ENCODE measurements at regions of chr1 and their contacts with region 1.

Region 1: DNA sequence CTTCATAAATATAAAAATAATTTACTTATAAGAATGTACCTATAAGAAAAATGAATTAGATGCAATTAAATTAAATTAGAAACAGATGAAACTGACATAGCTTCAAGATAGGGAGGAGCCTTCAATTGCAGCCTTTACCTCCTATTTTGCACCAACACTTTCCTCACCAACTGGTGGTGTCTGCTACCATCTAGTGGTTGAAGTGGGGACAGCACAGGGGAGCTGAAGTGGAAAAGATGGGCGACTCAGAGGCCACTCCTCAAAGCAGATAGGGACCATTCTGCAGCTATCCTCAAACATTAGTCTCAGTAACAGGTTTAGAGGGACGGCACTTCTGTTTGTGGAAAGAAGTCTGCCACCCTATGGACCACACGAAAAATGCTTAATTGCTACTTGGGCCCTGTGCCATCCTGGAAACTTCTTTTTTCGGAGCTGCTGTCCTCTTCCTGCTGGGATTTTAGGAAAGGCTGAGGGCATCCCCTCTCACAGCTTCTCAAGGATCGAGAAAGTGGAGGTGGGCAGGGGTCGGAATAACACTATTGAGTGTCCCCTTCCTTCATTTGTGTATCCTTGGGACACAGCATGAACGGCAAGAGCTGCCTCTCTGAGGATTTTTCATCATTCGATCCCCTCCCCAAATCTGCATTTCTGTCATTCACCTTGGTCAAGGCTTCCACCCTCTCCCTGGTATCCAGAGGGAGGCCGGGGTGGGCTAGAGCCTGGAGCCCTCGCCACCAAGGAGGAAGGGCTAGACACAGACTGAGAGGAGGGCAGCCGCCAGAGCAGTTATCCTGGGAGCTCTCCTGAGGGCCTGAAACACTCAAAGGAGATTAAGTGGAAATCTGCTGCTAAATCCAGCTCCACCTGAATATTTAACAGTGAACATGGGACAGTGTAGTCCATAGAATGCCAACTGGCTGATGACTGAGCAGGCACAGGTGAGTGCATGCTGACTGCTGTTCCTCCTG is 9.6 kb downstream of the PROK1 start:
- DNase-seq: peak; percentile 72 to 89 (median 82)
- ATAC-seq: peak; percentile 99
- H3K4me3 ChIP-seq: no peak overlapping the region
- H3K4me3 Mint-ChIP-seq: no peak overlapping the region
- H3K27ac ChIP-seq: no peak overlapping the region
- H3K27ac Mint-ChIP-seq: no peak overlapping the region
- H3K4me1 ChIP-seq: no peaks in the 10 kb centered on the region
- H3K4me1 Mint-ChIP-seq: no peaks in the 10 kb centered on the region
- H3K27me3 ChIP-seq: peaks cover 0 to under 1% of the 10 kb centered on the region in 2 experiments
- H3K27me3 Mint-ChIP-seq: no peaks in the 10 kb centered on the region
- CTCF ChIP-seq: peak; percentile 95

Region 2: GRCh38 chr1:110053557-110054428 is 406.7 kb before region 1 on chr1:
- CTCF ChIA-PET with region 1: no interaction called
- POLR2A ChIA-PET with region 1: no interaction called
- intact Hi-C with region 1: loop called in 1 of 2 experiments (anchors 10 kb)
- DNase-seq: peak; percentile 37 to 79 (median 64)
- ATAC-seq: peak; percentile 87
- H3K4me3 ChIP-seq: no peak overlapping the region
- H3K4me3 Mint-ChIP-seq: no peak overlapping the region
- H3K27ac ChIP-seq: no peak overlapping the region
- H3K27ac Mint-ChIP-seq: no peak overlapping the region
- H3K4me1 ChIP-seq: no peaks in the 10 kb centered on the region
- H3K4me1 Mint-ChIP-seq: peaks cover 5% of the 10 kb centered on the region
- H3K27me3 ChIP-seq: no peaks in the 10 kb centered on the region
- H3K27me3 Mint-ChIP-seq: no peaks in the 10 kb centered on the region
- CTCF ChIP-seq: peak; percentile 89

Region 3: GRCh38 chr1:110196917-110197765 is 263.4 kb before region 1 on chr1:
- CTCF ChIA-PET with region 1: interaction called, 26 read pairs
- POLR2A ChIA-PET with region 1: no interaction called
- intact Hi-C with region 1: loop called (anchors 1 kb)
- DNase-seq: peak; percentile 24 to 75 (median 38)
- ATAC-seq: peak; percentile 99
- H3K4me3 ChIP-seq: no peak overlapping the region
- H3K4me3 Mint-ChIP-seq: no peak overlapping the region
- H3K27ac ChIP-seq: no peak overlapping the region
- H3K27ac Mint-ChIP-seq: no peak overlapping the region
- H3K4me1 ChIP-seq: no peaks in the 10 kb centered on the region
- H3K4me1 Mint-ChIP-seq: no peaks in the 10 kb centered on the region
- H3K27me3 ChIP-seq: no peaks in the 10 kb centered on the region
- H3K27me3 Mint-ChIP-seq: no peaks in the 10 kb centered on the region
- CTCF ChIP-seq: peak; percentile 96

Region 4: DNA sequence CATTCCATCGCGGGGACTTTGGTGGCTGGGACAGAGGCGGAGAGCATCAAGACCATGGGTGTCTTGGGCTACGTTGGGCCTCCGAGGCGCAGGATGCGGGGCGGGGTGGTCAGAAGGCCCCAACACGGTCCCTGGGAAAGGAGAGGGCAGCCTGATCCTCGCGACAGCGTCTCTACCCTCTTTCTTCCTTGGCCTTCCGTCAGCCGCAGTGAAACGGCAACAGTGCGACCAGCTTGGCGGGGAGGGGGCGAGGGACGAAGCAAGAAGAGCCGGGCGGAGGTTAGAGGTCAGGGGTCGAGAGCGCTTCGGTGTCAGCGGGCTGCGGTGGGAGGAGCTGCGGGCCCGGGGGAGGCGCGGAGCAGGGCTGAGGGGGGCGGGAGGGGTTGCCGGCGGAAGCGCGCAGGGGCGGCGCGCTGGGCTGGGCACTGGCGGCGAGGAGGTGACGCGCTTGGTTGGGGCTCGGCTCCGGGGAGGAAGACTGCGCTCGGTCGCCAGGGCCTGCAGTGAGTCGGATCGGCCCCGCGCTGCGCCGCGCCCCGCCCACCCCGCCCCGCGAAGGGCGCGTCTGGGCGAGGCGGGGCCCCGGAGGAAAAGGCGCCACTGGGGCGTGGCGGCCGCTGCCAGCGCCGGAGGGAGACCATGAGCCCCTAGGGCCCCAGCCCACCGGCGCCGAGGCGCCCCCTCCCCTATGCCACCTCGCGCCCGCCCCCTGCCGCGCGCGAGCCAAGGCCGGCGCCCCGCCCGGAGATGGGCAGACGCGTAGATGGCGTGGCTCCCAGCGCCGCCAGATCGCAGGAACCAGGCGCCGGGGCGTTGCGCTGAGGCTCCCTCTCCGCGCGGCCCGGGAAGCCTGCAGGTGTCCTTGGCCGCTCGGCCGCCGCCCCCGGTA is 250.6 kb before region 1 on chr1 and contains the start of gene KCNC4:
- CTCF ChIA-PET with region 1: interaction called, 39 read pairs
- POLR2A ChIA-PET with region 1: interaction called, 18 read pairs
- intact Hi-C with region 1: no loop called
- DNase-seq: peak; percentile 86 to 98 (median 92)
- ATAC-seq: peak; percentile 85
- H3K4me3 ChIP-seq: peak within 1 kb of the TSS; percentile 70
- H3K4me3 Mint-ChIP-seq: peak within 1 kb of the TSS; percentile 94
- H3K27ac ChIP-seq: peak within 1 kb of the TSS; percentile 84 to 86
- H3K27ac Mint-ChIP-seq: peak within 1 kb of the TSS; percentile 94
- H3K4me1 ChIP-seq: peaks cover 50% of the 10 kb centered on the region
- H3K4me1 Mint-ChIP-seq: peaks cover 66% of the 10 kb centered on the region
- H3K27me3 ChIP-seq: no peaks in the 10 kb centered on the region
- H3K27me3 Mint-ChIP-seq: no peaks in the 10 kb centered on the region
- CTCF ChIP-seq: no peak
- total RNA-seq, gene KCNC4: 16.5 to 17.7 TPM

Region 5: DNA sequence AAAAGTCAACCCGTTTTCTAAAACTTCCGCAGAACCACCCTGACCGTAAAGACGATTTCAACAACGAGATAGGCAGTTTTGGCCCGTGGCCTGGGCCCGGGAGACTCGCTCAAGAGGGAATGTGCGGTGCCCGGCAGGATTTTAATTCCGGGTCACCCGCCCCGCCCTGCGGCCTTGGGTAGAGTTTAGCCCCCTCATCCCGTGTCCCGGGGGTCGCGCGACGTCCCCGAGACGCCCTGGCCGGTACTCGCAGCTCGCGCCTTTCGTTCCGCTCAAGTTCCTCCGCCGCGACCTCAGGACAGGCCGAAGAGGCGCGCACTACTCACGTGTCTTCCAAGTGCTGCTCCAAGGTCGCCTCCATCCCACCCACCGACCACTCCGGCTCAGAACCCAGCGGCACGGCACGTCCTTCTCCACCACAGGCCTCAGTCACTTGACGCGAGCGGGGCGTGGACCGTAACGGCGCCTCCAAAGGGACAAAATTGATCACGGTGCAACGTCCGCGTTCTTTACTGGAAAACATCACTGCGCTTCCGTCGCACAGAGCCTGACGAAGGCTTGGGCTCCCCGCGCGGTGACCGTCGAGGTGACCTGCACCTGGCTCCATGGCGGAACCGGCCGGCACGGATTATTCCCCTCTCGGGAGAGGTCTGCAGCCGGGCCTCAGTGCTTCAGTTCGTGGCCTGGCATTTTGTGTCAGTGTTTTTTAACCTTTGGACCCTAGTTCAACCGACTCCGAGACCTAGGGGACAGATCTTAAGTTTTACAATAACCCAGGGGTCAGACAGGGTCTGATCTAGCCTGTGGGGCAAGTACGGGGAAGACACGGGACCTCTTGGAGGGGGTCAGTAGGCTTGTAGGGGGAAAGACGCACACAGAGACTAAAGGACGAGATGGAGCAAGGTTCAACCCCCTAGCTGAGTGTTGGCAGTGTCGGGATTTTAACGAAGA is 53.0 kb before region 1 on chr1 and contains the start of gene LAMTOR5:
- CTCF ChIA-PET with region 1: interaction called, 33 read pairs
- POLR2A ChIA-PET with region 1: interaction called, 5 read pairs
- intact Hi-C with region 1: loop called (anchors 1 to 2 kb)
- DNase-seq: peak; percentile 79 to 95 (median 86)
- ATAC-seq: peak; percentile 94
- H3K4me3 ChIP-seq: peak within 1 kb of the TSS; percentile 90
- H3K4me3 Mint-ChIP-seq: peak within 1 kb of the TSS; percentile 99
- H3K27ac ChIP-seq: peak within 1 kb of the TSS; percentile 84 to 88
- H3K27ac Mint-ChIP-seq: peak within 1 kb of the TSS; percentile 99
- H3K4me1 ChIP-seq: peaks cover 26% of the 10 kb centered on the region
- H3K4me1 Mint-ChIP-seq: peaks cover 38% of the 10 kb centered on the region
- H3K27me3 ChIP-seq: no peaks in the 10 kb centered on the region
- H3K27me3 Mint-ChIP-seq: no peaks in the 10 kb centered on the region
- CTCF ChIP-seq: no peak
- total RNA-seq, gene LAMTOR5: 105 to 108 TPM

Region 6: DNA sequence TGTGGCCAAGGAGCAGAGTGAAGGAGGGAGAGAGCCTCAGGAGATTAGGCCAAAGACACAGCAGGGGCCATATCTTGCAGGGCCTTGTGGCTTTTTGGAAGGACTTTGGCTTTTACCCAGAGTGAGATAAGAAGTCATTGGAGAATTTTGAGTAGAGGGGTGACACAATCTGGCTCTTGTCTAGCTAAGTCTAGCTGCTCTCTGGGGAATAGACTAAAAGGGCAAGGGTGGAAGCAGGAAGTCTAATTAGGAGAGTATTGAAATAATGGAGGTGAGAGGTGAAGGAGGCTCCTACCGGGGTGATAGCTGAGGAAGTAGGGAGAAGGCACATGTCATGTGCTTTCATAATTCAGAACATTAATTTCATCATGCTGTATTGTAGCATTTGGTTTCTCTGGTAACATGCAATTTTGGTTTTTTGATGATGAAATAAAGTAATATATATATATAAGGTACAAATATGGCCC is 248.5 kb after region 1 on chr1:
- CTCF ChIA-PET with region 1: no interaction called
- POLR2A ChIA-PET with region 1: no interaction called
- intact Hi-C with region 1: no loop called
- DNase-seq: no peak
- ATAC-seq: no peak
- H3K4me3 ChIP-seq: no peak overlapping the region
- H3K4me3 Mint-ChIP-seq: no peak overlapping the region
- H3K27ac ChIP-seq: no peak overlapping the region
- H3K27ac Mint-ChIP-seq: no peak overlapping the region
- H3K4me1 ChIP-seq: peaks cover 5% of the 10 kb centered on the region
- H3K4me1 Mint-ChIP-seq: peaks cover 26% of the 10 kb centered on the region
- H3K27me3 ChIP-seq: no peaks in the 10 kb centered on the region
- H3K27me3 Mint-ChIP-seq: no peaks in the 10 kb centered on the region
- CTCF ChIP-seq: no peak

Region 7: DNA sequence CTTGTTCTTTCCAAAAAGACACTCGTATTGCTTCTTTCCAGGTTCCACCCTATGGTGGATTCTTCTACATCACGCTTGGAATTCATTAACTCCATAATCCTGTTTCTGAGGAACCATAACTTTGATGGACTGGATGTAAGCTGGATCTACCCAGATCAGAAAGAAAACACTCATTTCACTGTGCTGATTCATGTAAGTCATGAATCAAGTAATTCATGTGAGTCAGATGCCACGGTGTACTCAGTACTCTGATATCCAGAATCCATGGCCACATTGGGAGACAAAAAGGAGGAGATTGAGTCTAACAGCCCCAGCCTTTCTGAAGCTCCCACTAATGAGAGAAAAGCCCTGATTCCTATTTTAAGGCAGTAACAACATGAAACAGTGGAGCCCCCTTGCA is 774.3 kb after region 1 on chr1:
- CTCF ChIA-PET with region 1: no interaction called
- POLR2A ChIA-PET with region 1: no interaction called
- intact Hi-C with region 1: no loop called
- DNase-seq: no peak
- ATAC-seq: no peak
- H3K4me3 ChIP-seq: no peak overlapping the region
- H3K4me3 Mint-ChIP-seq: no peak overlapping the region
- H3K27ac ChIP-seq: no peak overlapping the region
- H3K27ac Mint-ChIP-seq: no peak overlapping the region
- H3K4me1 ChIP-seq: peaks cover 13% of the 10 kb centered on the region
- H3K4me1 Mint-ChIP-seq: peaks cover 70% of the 10 kb centered on the region
- H3K27me3 ChIP-seq: no peaks in the 10 kb centered on the region
- H3K27me3 Mint-ChIP-seq: no peaks in the 10 kb centered on the region
- CTCF ChIP-seq: no peak